Activated CD4-positive, alpha-beta memory T cell treated with anti-CD3 and anti-CD28 coated beads for 36 hours (primary cell): ENCODE measurements at regions of chr9 and their contacts with region 1.

Region 1: GRCh38 chr9:91150998-91151717 is 210.6 kb downstream of the AUH start:
- DNase-seq: peak; percentile 55
- H3K4me3 Mint-ChIP-seq: peak overlapping the region; percentile 32
- H3K27ac Mint-ChIP-seq: peak overlapping the region; percentile 97
- H3K4me1 Mint-ChIP-seq: peaks cover 72% of the 10 kb centered on the region
- H3K27me3 Mint-ChIP-seq: no peaks in the 10 kb centered on the region

Region 2: GRCh38 chr9:91004992-91005391 is 146.2 kb before region 1 on chr9:
- CTCF ChIA-PET with region 1: no interaction called
- POLR2A ChIA-PET with region 1: no interaction called
- intact Hi-C with region 1: no loop called
- DNase-seq: no peak
- H3K4me3 Mint-ChIP-seq: no peak overlapping the region
- H3K27ac Mint-ChIP-seq: no peak overlapping the region
- H3K4me1 Mint-ChIP-seq: peaks cover 6% of the 10 kb centered on the region
- H3K27me3 Mint-ChIP-seq: peaks cover 1% of the 10 kb centered on the region

Region 3: DNA sequence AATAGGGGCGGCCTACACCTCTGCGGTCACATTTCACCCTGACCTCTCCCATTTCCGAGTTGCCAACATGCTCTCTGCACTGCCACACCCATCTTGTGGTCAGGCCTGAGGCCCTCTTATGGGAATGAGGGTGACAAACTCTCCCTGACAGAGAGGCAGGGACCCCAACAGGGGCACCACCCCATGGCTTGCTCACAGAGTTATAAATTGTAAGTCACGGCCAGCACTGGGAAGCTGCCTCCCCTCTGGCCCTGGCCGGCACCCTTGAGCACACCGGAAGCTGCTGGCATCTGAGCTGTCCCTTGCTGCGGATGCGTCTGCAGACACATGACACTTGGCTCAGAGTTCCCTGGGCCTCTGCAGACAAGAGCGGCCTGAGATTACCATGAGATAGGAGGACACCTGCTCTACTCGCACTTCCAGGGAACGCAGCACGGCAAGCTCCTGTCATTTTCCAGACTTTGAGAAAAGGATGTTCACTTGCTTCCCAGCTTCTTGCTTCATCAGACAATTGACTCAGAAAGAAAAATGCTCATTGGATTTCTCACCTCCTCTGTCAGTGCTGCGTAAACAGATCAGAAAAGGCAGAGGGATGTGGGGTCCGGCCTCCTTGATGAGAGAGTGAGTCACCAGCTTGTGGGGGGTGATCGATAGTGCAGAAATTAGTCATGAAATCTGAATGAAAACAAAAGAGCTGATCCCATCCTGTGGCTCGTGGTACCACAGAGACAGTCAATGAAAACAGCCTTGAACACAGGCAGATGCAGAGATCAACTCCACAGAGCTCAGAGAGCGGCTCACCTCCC is 79.8 kb before region 1 on chr9:
- CTCF ChIA-PET with region 1: interaction called, 4 read pairs
- POLR2A ChIA-PET with region 1: interaction called, 11 read pairs
- intact Hi-C with region 1: no loop called
- DNase-seq: peak; percentile 88
- H3K4me3 Mint-ChIP-seq: peak overlapping the region; percentile 9
- H3K27ac Mint-ChIP-seq: peak overlapping the region; percentile 85
- H3K4me1 Mint-ChIP-seq: peaks cover 18% of the 10 kb centered on the region
- H3K27me3 Mint-ChIP-seq: peaks cover 7% of the 10 kb centered on the region

Region 4: DNA sequence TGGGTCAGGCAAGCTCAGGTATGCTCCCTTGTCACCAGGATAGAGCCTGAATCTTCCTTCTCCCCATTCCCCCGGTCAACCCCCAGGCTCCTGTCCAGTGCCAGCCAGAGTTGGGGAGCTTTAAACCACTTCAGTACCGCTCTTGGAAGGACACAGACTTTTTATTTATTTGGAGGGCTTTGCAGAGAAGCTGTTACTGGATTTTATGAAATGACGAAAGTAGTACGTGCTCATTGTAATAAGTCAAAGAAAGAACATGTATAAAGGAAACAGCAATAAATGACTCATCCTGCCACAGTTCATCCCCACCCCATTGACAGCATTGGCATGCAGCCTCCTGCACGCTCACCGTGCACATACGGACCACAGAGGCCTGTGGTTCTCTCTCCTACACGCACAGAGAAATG is 19.7 kb before region 1 on chr9:
- CTCF ChIA-PET with region 1: interaction called, 11 read pairs
- POLR2A ChIA-PET with region 1: interaction called, 50 read pairs
- intact Hi-C with region 1: loop called (anchors 1 kb)
- DNase-seq: peak; percentile 92
- H3K4me3 Mint-ChIP-seq: peak overlapping the region; percentile 32
- H3K27ac Mint-ChIP-seq: peak overlapping the region; percentile 90
- H3K4me1 Mint-ChIP-seq: peaks cover 26% of the 10 kb centered on the region
- H3K27me3 Mint-ChIP-seq: peaks cover 4% of the 10 kb centered on the region

Region 5: GRCh38 chr9:91177661-91178280 is 26.6 kb after region 1 on chr9:
- CTCF ChIA-PET with region 1: interaction called, 5 read pairs
- POLR2A ChIA-PET with region 1: interaction called, 22 read pairs
- intact Hi-C with region 1: no loop called
- DNase-seq: peak; percentile 70
- H3K4me3 Mint-ChIP-seq: peak overlapping the region; percentile 9
- H3K27ac Mint-ChIP-seq: peak overlapping the region; percentile 89
- H3K4me1 Mint-ChIP-seq: peaks cover 37% of the 10 kb centered on the region
- H3K27me3 Mint-ChIP-seq: no peaks in the 10 kb centered on the region

Region 6: GRCh38 chr9:91245431-91246313 is 94.5 kb after region 1 on chr9:
- CTCF ChIA-PET with region 1: no interaction called
- POLR2A ChIA-PET with region 1: no interaction called
- intact Hi-C with region 1: loop called (anchors 1 kb)
- DNase-seq: peak; percentile 41
- H3K4me3 Mint-ChIP-seq: no peak overlapping the region
- H3K27ac Mint-ChIP-seq: peak overlapping the region; percentile 89
- H3K4me1 Mint-ChIP-seq: peaks cover 28% of the 10 kb centered on the region
- H3K27me3 Mint-ChIP-seq: no peaks in the 10 kb centered on the region

Region 7: DNA sequence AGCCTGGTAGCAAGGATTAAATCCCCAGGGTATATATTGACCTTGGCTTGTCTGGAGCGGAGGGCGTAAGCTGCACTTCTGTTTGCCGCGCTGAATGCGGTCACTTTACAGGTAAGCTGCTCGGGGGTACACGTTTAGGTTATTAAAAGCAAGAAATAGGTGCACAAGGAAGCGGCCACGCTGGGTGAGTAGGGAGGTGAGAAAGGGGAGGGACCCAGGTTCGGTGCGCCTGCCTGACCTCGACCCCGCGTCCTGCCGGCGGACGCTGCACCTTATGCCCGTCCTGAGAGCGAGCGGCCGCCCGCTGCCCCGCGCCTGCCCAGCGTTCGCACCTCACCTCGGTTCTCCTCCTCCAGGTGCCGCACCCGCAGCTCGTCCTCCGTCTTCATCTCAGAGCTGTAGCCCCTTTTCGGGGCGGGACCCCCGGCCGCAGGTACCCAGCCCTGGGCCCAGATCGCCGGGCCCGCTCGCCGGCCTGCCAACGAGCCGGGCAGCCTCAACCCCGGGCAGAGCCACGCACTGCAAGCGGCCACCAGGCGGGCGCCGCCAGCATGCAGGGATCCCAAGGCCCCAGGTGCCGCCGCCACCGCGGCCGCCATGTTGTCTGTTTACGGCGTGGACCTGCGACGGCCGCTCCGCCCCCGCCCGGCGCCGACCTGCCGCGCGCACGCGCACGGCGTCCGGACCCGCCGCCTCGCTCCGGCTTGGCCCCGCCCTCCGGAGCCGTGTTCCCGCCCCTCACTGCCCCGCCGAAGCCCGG is 210.3 kb after region 1 on chr9 and contains the start of gene AUH:
- CTCF ChIA-PET with region 1: no interaction called
- POLR2A ChIA-PET with region 1: interaction called, 12 read pairs
- intact Hi-C with region 1: loop called (anchors 1 kb)
- DNase-seq: peak; percentile 91
- H3K4me3 Mint-ChIP-seq: peak within 1 kb of the TSS; percentile 96
- H3K27ac Mint-ChIP-seq: peak within 1 kb of the TSS; percentile 95
- H3K4me1 Mint-ChIP-seq: peaks cover 50% of the 10 kb centered on the region
- H3K27me3 Mint-ChIP-seq: no peaks in the 10 kb centered on the region
- total RNA-seq, gene AUH: 38.8 to 40.9 TPM